OCI-LY7 (cell line): ENCODE measurements at regions of chr14 and their contacts with region 1.

Region 1: DNA sequence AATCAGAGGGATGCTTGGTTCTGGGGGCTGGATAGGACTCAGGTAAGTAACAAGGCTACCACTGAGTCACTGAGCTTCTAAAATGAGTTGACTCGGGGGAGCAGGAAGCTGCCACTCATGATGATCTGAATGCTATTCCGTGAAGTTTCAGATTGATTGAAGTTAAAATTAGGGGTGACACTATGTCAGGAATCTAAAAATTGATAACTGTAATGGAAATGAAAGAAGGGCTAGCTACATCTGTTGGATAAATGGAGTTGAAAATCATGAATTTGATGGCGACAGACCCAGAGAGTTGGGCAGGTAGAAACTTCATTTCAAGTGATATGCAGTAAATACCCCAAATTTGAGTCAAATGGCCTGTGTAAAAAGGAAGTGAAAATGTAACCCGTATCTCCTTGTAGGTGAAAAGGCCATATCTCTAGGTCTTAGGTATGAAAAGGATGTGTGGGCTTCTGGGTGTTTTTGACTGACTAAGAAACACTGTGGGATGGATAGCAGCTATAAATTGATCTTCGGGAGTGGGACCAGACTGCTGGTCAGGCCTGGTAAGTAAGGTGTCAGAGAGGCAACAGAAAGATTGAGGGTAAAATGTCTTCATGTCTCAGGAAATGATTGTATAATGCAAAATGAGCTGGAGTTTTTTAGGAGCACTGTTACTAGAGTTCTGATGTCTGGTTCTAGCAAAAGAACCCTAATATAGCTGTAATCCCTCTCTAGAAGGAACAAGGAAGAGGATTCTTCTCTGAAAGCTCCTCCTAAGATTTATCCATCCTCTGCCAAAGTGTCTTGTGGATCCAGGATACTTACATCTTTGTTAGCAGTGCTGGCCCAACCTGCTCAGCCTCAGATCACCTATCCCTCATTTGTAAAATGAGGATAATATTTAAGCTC is 57.3 kb downstream of the DAD1 start:
- DNase-seq: peak; percentile 79
- H3K4me3 ChIP-seq: peak overlapping the region; percentile 70
- H3K27ac ChIP-seq: peak overlapping the region; percentile 88
- H3K4me1 ChIP-seq: peaks cover 84% of the 10 kb centered on the region
- CTCF ChIP-seq: no peak

Region 2: DNA sequence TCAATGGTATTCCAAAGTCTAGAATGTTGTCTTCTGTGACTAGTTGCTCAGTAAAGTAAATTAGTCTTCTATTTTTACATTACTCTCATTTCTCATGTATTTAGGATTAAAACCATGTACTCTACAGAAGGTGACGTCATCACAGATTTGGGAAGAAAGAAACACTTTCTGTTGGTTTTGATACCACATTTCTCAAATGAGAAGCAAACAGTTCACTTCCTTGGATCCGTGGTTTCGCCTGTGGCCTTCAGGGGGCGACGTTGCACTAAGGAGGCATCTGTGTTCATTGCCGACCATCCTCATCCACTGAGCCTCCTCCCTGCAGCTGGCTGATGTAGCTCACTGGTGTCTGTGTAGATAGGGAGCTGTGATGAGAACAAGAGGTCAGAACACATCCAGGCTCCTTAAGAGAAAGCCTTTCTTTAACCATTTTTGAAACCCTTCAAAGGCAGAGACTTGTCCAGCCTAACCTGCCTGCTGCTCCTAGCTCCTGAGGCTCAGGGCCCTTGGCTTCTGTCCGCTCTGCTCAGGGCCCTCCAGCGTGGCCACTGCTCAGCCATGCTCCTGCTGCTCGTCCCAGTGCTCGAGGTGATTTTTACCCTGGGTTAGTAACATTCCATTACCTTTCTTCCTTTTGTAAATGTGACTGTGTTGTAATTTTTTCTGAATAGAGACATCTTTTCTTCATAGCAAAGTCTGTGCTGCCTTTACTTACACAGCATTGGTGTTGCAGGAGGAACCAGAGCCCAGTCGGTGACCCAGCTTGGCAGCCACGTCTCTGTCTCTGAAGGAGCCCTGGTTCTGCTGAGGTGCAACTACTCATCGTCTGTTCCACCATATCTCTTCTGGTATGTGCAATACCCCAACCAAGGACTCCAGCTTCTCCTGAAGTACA is 637.4 kb before region 1 on chr14:
- CTCF ChIA-PET with region 1: no interaction called
- POLR2A ChIA-PET with region 1: no interaction called
- intact Hi-C with region 1: no loop called
- DNase-seq: peak; percentile 80
- H3K4me3 ChIP-seq: peak overlapping the region; percentile 34
- H3K27ac ChIP-seq: peak overlapping the region; percentile 71
- H3K4me1 ChIP-seq: peaks cover 20% of the 10 kb centered on the region
- CTCF ChIP-seq: peak; percentile 90

Region 3: DNA sequence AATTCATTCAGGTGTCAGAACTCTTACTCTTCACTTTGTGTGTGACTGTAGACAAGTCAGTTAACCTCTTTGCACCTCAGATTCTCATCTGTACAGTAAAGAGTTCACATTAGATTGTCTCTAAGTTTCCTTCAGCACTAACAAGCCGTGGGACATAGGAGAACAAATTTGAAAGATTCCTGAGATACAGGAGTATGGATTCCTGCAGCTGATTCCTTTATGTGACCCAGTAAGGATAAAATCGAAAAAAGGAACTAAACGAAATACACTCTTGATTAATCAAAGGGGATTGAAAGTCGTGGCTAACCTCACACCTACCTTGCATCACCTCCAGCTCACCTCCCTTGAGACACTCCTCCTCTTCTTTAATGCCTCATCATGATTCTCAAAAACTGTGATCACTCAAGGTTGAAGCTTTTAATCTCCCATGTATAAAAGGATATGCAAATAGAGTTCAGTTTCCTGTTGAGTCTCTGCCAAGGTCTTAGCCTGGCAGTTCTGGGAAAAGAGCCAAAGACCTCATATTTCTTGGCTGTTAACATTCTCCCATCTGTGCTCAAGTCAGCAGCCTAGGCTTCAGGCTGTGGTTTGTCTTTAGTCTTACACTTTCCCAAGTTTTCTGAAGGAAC is 99.2 kb before region 1 on chr14:
- CTCF ChIA-PET with region 1: no interaction called
- POLR2A ChIA-PET with region 1: interaction called, 10 read pairs
- intact Hi-C with region 1: no loop called
- DNase-seq: peak; percentile 94
- H3K4me3 ChIP-seq: peak overlapping the region; percentile 61
- H3K27ac ChIP-seq: peak overlapping the region; percentile 97
- H3K4me1 ChIP-seq: peaks cover 88% of the 10 kb centered on the region
- CTCF ChIP-seq: no peak

Region 4: GRCh38 chr14:22478670-22479069 is 53.0 kb before region 1 on chr14:
- CTCF ChIA-PET with region 1: interaction called, 5 read pairs
- POLR2A ChIA-PET with region 1: interaction called, 21 read pairs
- intact Hi-C with region 1: loop called (anchors 2 kb)
- DNase-seq: no peak
- H3K4me3 ChIP-seq: peak overlapping the region; percentile 53
- H3K27ac ChIP-seq: peak overlapping the region; percentile 81
- H3K4me1 ChIP-seq: peaks cover 100% of the 10 kb centered on the region
- CTCF ChIP-seq: no peak

Region 5: GRCh38 chr14:22505697-22506377 is 25.9 kb before region 1 on chr14:
- CTCF ChIA-PET with region 1: interaction called, 7 read pairs
- POLR2A ChIA-PET with region 1: interaction called, 66 read pairs
- intact Hi-C with region 1: no loop called
- DNase-seq: peak; percentile 66
- H3K4me3 ChIP-seq: peak overlapping the region; percentile 8
- H3K27ac ChIP-seq: peak overlapping the region; percentile 64
- H3K4me1 ChIP-seq: peaks cover 84% of the 10 kb centered on the region
- CTCF ChIP-seq: no peak

Region 6: DNA sequence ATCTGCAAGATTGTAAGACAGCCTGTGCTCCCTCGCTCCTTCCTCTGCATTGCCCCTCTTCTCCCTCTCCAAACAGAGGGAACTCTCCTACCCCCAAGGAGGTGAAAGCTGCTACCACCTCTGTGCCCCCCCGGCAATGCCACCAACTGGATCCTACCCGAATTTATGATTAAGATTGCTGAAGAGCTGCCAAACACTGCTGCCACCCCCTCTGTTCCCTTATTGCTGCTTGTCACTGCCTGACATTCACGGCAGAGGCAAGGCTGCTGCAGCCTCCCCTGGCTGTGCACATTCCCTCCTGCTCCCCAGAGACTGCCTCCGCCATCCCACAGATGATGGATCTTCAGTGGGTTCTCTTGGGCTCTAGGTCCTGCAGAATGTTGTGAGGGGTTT is 19.9 kb after region 1 on chr14:
- CTCF ChIA-PET with region 1: interaction called, 19 read pairs
- POLR2A ChIA-PET with region 1: interaction called, 47 read pairs
- intact Hi-C with region 1: loop called (anchors 1 kb)
- DNase-seq: no peak
- H3K4me3 ChIP-seq: no peak overlapping the region
- H3K27ac ChIP-seq: peak overlapping the region; percentile 97
- H3K4me1 ChIP-seq: peaks cover 80% of the 10 kb centered on the region
- CTCF ChIP-seq: no peak